Body of pancreas (tissue), 4 donors: ENCODE measurements at regions of chr13 and their contacts with region 1.

Region 1: DNA sequence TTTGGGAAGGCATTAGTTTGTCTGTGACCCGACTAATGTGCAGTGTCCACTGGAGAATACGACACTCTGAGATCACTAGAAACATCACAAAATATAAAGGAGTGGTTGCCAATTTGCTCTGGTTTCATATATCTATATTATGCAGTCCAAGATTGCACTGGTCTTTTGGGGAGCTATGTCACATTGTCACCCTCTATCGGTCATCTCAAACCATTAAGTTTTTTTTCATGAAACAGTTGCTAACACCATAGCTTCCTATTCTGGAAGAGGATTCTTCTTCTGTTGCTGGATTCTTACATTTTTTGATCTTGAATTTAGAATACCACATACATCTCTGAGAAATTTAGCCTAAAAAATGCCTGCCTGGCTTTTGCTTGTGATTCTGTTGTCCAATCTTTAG is 168.6 kb downstream of the LACC1 start:
- DNase-seq: no peak
- ATAC-seq: no peak
- H3K4me3 ChIP-seq: no peak overlapping the region
- H3K27ac ChIP-seq: no peak overlapping the region
- H3K4me1 ChIP-seq: peaks cover 10% of the 10 kb centered on the region
- H3K27me3 ChIP-seq: no peaks in the 10 kb centered on the region
- CTCF ChIP-seq: peak in 3 of 7 experiments; percentile 10 to 24 (median 22)
- POLR2A ChIP-seq: no peak

Region 2: GRCh38 chr13:43915451-43915850 is 132.9 kb before region 1 on chr13:
- intact Hi-C with region 1: loop called (anchors 10 kb)
- DNase-seq: no peak
- ATAC-seq: no peak
- H3K4me3 ChIP-seq: no peak overlapping the region
- H3K27ac ChIP-seq: no peak overlapping the region
- H3K4me1 ChIP-seq: no peaks in the 10 kb centered on the region
- H3K27me3 ChIP-seq: no peaks in the 10 kb centered on the region
- CTCF ChIP-seq: no peak
- POLR2A ChIP-seq: no peak

Region 3: DNA sequence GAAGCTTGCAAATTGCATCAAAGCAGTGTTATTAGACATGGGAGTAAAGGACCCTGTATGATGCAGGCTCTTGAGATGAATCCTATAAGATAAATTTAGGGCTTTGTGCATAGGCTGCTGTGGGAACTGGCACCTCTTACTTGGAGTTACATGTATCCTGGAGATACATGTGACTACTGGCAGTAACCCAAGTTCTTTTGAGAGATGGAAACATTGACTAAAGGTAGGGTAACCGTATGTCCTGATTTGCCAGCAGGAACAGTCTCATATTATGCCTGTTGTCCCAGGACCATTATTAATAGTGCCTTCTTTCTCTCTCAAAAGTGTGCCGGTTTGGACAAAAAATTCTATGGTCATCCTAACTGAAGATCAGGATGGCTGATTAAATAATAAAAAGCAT is 26.8 kb after region 1 on chr13:
- intact Hi-C with region 1: no loop called
- DNase-seq: no peak
- ATAC-seq: no peak
- H3K4me3 ChIP-seq: no peak overlapping the region
- H3K27ac ChIP-seq: no peak overlapping the region
- H3K4me1 ChIP-seq: no peaks in the 10 kb centered on the region
- H3K27me3 ChIP-seq: no peaks in the 10 kb centered on the region
- CTCF ChIP-seq: no peak
- POLR2A ChIP-seq: no peak

Region 4: DNA sequence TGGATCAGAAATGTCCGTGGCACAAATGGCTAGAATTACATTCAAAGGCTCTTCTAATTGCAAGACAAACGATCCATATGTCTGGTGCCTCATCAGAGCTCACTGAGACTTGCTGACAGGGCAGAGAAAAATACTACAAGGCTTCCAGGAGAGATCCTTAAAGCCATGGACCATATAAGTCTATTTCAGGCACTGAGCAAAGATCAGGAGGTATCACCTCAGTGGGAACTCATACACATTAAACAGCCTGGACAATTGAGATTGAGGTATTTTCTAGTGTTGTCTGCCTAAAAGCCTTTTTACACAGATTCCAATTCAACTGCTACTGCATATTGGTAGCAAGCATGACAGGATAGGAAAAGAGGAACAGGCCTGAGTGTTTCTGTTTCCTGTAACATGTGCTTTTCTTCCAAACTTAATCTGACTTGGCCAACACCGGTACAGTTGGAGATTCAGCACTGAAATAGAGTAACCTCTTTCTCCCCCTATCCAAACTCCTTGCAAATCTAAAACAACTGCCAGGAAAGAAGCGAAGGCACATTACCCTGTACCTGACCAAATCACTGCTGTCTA is 391.2 kb after region 1 on chr13:
- intact Hi-C with region 1: loop called (anchors 10 kb)
- DNase-seq: no peak
- ATAC-seq: no peak
- H3K4me3 ChIP-seq: no peak overlapping the region
- H3K27ac ChIP-seq: no peak overlapping the region
- H3K4me1 ChIP-seq: peaks cover 9% of the 10 kb centered on the region
- H3K27me3 ChIP-seq: no peaks in the 10 kb centered on the region
- CTCF ChIP-seq: no peak
- POLR2A ChIP-seq: no peak